ENCODE measurements at regions of chr3 and their contacts with region 1.

Region 1: DNA sequence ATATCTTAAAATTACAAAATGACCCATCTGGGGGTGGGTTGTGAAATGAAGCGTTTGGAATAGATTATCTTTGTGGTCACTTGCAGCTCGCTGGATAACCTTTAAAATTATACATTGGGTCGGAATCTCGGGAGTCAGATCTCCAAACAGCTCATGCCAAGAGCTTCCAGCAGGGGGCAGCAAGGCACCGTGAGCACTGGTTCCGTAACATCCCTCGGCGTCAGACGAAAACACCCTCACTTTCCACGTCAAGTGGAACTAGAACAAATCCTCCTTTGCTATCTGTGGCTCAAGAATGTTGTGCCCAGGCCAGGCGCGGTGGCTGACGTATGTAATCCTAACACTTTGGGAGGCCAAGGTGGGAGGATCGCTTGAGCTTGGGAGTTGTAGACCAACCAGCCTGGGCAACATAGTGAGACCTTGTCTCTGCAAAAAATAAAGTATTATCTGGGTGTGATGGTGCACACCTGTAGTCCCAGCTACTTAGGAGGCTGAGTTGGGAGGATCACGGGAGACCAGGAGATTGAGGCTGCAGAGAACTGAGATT is 31.1 kb downstream of the UMPS start:
- DNase-seq: peak; percentile 50 to 91
- H3K4me3 ChIP-seq: no peak overlapping the region
- H3K27ac ChIP-seq: no peak overlapping the region
- H3K4me1 ChIP-seq: peaks cover 0 to 3% (median 0%) of the 10 kb centered on the region in 4 experiments; a peak in 3 of 7 replicates
- H3K27me3 ChIP-seq: no peaks in the 10 kb centered on the region; a peak in 1 of 7 replicates
- CTCF ChIP-seq: peak; percentile 84 to 93 (median 90)
- EP300 ChIP-seq: no peak
- POLR2A ChIP-seq: no peak
- RAD21 ChIP-seq: peak; percentile 93 to 95

Region 2: DNA sequence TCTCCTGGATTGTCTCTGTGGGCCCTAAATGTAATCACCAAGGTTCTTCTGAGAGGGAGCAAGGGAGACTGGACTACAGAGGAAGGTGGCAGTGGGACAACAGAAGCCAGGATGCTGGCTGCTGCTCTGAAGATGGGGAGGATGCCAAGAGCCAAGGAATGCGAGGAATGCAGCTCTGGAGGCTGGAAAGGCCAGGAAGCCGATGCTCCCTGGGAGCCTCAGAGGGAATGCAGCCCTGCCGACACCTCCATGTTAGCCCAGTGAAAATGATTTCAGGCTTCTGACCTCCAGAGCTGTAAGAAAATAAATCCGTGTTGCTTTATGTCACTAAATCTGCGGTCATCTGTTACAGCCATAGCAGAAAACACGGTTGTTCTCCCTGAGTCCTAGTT is 13.0 kb after region 1 on chr3:
- CTCF ChIA-PET with region 1: interaction called, 36 read pairs
- POLR2A ChIA-PET with region 1: no interaction called
- DNase-seq: peak in 1 of 2 experiments; percentile 33
- H3K4me3 ChIP-seq: no peak overlapping the region
- H3K27ac ChIP-seq: peak overlapping the region; percentile 25; the same call in 1 of the 2 replicates
- H3K4me1 ChIP-seq: peaks cover 6 to 14% (median 8%) of the 10 kb centered on the region in 4 experiments; a peak in 6 of 7 replicates
- H3K27me3 ChIP-seq: no peaks in the 10 kb centered on the region
- CTCF ChIP-seq: no peak
- EP300 ChIP-seq: 0 out of 3 replicates have a peak, but pooled peaks of 1 of the 2 experiments have one; percentile 15
- POLR2A ChIP-seq: no peak
- RAD21 ChIP-seq: no peak

Region 3: GRCh38 chr3:124802702-124803101 is 41.4 kb after region 1 on chr3:
- CTCF ChIA-PET with region 1: interaction called, 11 read pairs
- POLR2A ChIA-PET with region 1: no interaction called
- DNase-seq: no peak
- H3K4me3 ChIP-seq: no peak overlapping the region
- H3K27ac ChIP-seq: no peak overlapping the region
- H3K4me1 ChIP-seq: peaks cover 2 to 16% (median 4%) of the 10 kb centered on the region in 4 experiments; a peak in 6 of 7 replicates
- H3K27me3 ChIP-seq: no peaks in the 10 kb centered on the region
- CTCF ChIP-seq: no peak
- EP300 ChIP-seq: no peak
- POLR2A ChIP-seq: no peak
- RAD21 ChIP-seq: no peak

Region 4: GRCh38 chr3:124887177-124887931 is 126.0 kb after region 1 on chr3 and contains the start of gene ITGB5:
- CTCF ChIA-PET with region 1: interaction called, 12 read pairs
- POLR2A ChIA-PET with region 1: interaction called, 11 read pairs
- DNase-seq: peak in 1 of 2 experiments; percentile 87
- H3K4me3 ChIP-seq: peak within 1 kb of the TSS; percentile 54 to 88 (median 68)
- H3K27ac ChIP-seq: peak within 1 kb of the TSS; percentile 52; the same call in 1 of the 2 replicates
- H3K4me1 ChIP-seq: peaks cover 7 to 40% (median 30%) of the 10 kb centered on the region in 4 experiments
- H3K27me3 ChIP-seq: no peaks in the 10 kb centered on the region
- CTCF ChIP-seq: no peak
- EP300 ChIP-seq: no peak
- POLR2A ChIP-seq: peak in 1 of 2 experiments; percentile 70; a peak in 2 of 3 replicates
- RAD21 ChIP-seq: 0 out of 4 replicates have a peak, but pooled peaks of 1 of the 2 experiments have one; percentile 0
- total RNA-seq, gene ITGB5: 251 and 268 TPM in 2 replicates

Region 5: DNA sequence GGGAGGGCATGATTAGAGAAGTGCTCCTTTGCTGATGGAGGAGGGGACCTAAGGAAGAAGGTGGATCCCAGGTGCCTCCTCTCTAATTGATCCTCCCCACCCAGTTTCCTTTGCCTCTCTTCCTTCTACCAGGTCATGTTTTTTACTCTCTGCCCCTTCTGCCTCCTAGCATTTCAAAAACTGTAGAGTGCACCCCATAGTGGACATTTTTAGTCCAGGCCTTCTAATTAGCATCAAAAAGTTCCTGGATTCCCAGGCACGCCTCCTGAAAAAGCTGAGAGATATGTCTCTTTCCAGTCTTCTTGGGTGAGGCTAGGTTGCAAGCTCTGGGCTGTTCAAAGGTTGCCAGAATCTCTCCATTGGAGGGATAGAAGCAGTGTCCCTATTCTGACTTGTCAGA is 144.5 kb after region 1 on chr3:
- CTCF ChIA-PET with region 1: interaction called, 173 read pairs
- POLR2A ChIA-PET with region 1: interaction called, 3 read pairs
- DNase-seq: no peak
- H3K4me3 ChIP-seq: no peak overlapping the region
- H3K27ac ChIP-seq: no peak overlapping the region
- H3K4me1 ChIP-seq: no peaks in the 10 kb centered on the region; a peak in 1 of 7 replicates
- H3K27me3 ChIP-seq: no peaks in the 10 kb centered on the region
- CTCF ChIP-seq: no peak
- EP300 ChIP-seq: no peak
- POLR2A ChIP-seq: no peak
- RAD21 ChIP-seq: no peak

Measured in H1 (cell line).